ENCODE measurements at regions of chr11 and their contacts with region 1.

Region 1: DNA sequence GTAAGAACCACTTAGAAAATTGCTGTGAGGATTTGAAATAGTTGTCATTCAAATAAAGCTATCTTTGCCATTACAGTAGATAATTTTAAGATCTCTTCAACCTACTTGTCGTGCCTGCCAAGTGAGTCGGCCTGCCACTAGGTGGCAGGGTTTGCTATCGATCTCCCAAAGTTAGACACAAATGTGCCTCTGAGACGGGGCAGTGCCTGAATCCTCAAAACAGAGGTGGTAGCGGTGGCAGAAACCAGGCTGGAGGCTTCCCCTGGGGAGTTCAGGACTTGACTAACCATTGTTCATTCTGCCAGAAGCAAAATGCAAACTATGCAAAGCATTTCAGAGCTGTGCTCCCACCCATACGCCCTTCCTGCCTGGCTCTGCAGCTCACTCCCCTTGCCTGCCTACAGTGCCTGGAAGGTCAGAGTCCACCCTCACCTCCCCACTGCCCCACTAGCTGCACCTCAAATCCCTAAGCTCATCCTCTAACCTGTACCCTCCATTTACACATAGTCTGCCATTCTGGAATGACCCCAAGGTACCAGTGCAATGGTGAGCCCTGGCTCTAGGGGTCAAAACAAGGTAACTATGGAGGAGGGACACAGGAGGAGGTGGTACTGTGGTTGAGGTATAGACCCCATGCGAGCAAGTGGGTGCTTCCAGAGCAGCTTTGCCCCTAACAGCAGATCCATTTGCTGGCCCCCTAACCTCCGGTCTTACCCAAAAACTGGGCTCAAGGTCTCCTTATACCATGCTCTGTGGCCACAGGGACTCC is 82.1 kb downstream of the C11orf58 start:
- DNase-seq: peak; percentile 90
- ATAC-seq: peak; percentile 94
- H3K4me3 Mint-ChIP-seq: no peak overlapping the region
- H3K27ac Mint-ChIP-seq: no peak overlapping the region
- H3K4me1 Mint-ChIP-seq: peaks cover 4% of the 10 kb centered on the region
- H3K27me3 Mint-ChIP-seq: no peaks in the 10 kb centered on the region

Region 2: GRCh38 chr11:16727806-16728205 is 92.7 kb before region 1 on chr11:
- CTCF ChIA-PET with region 1: no interaction called
- POLR2A ChIA-PET with region 1: no interaction called
- intact Hi-C with region 1: no loop called
- DNase-seq: no peak
- ATAC-seq: no peak
- H3K4me3 Mint-ChIP-seq: no peak overlapping the region
- H3K27ac Mint-ChIP-seq: no peak overlapping the region
- H3K4me1 Mint-ChIP-seq: no peaks in the 10 kb centered on the region
- H3K27me3 Mint-ChIP-seq: peaks cover 6% of the 10 kb centered on the region

Region 3: DNA sequence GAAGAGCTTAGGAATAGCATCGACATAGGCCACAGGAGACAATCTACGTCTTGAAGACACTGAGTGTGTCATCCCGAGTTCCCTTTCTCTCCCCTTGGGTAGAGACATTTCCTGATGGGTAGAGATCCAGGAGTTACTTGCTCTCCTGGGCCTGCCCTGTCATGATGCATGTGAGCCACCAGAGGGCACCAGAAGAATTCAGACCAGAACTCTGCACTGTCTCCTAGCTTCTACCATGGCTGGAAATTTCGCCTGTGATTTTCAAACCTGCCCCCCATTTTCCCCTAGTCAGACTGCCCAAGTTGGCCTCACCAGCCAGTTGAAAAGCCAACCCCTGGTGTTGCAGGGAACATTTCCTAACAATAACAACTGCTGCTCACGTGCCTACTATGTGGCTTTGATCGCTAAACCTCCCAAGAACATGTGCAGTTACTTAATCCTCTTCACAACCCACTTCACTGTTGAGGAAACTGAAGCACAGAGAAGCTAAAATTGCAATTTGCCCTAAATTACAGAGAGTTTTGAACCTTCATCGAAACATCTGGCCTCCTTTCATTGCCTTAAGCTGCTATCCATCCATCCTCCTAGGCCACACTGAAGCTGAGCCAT is 34.9 kb before region 1 on chr11:
- CTCF ChIA-PET with region 1: interaction called, 8 read pairs
- POLR2A ChIA-PET with region 1: no interaction called
- intact Hi-C with region 1: loop called in 1 of 2 experiments (anchors 1 kb)
- DNase-seq: peak; percentile 77
- ATAC-seq: peak; percentile 80
- H3K4me3 Mint-ChIP-seq: no peak overlapping the region
- H3K27ac Mint-ChIP-seq: no peak overlapping the region
- H3K4me1 Mint-ChIP-seq: no peaks in the 10 kb centered on the region
- H3K27me3 Mint-ChIP-seq: no peaks in the 10 kb centered on the region

Region 4: GRCh38 chr11:16831316-16832192 is 11.0 kb after region 1 on chr11:
- CTCF ChIA-PET with region 1: interaction called, 13 read pairs
- POLR2A ChIA-PET with region 1: no interaction called
- intact Hi-C with region 1: no loop called
- DNase-seq: no peak
- ATAC-seq: no peak
- H3K4me3 Mint-ChIP-seq: no peak overlapping the region
- H3K27ac Mint-ChIP-seq: no peak overlapping the region
- H3K4me1 Mint-ChIP-seq: peaks cover 17% of the 10 kb centered on the region
- H3K27me3 Mint-ChIP-seq: no peaks in the 10 kb centered on the region

Region 5: DNA sequence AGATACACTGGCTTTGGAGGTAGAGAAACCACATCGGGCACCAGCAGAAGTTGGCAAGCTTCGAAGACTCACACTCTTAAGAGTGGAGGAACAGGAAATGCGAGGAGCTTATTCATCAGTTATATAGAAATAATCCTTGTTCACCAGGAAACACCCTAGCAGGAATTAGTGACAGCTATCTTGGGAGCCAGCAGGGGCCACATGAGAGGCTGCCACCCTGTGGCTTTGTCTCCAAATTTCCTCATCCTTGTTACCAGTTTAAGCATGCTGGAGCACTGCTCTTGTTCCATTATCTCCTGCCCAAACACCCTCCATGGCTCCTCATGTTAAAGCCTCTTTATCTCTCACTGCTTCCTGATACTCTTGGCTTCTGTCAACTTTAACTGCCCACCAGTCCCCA is 62.7 kb after region 1 on chr11:
- CTCF ChIA-PET with region 1: interaction called, 4 read pairs
- POLR2A ChIA-PET with region 1: no interaction called
- intact Hi-C with region 1: loop called in 1 of 2 experiments (anchors 1 kb)
- DNase-seq: no peak
- ATAC-seq: no peak
- H3K4me3 Mint-ChIP-seq: no peak overlapping the region
- H3K27ac Mint-ChIP-seq: no peak overlapping the region
- H3K4me1 Mint-ChIP-seq: peaks cover 4% of the 10 kb centered on the region
- H3K27me3 Mint-ChIP-seq: peaks cover 2% of the 10 kb centered on the region

Region 6: GRCh38 chr11:16935518-16936302 is 115.2 kb after region 1 on chr11:
- CTCF ChIA-PET with region 1: interaction called, 8 read pairs
- POLR2A ChIA-PET with region 1: no interaction called
- intact Hi-C with region 1: loop called in 1 of 2 experiments (anchors 1 kb)
- DNase-seq: peak; percentile 61
- ATAC-seq: peak; percentile 86
- H3K4me3 Mint-ChIP-seq: no peak overlapping the region
- H3K27ac Mint-ChIP-seq: no peak overlapping the region
- H3K4me1 Mint-ChIP-seq: no peaks in the 10 kb centered on the region
- H3K27me3 Mint-ChIP-seq: peaks cover 7% of the 10 kb centered on the region

Region 7: GRCh38 chr11:17063171-17064002 is 242.9 kb after region 1 on chr11:
- CTCF ChIA-PET with region 1: interaction called, 52 read pairs
- POLR2A ChIA-PET with region 1: no interaction called
- intact Hi-C with region 1: loop called (anchors 1 kb)
- DNase-seq: peak; percentile 80
- ATAC-seq: peak; percentile 89
- H3K4me3 Mint-ChIP-seq: no peak overlapping the region
- H3K27ac Mint-ChIP-seq: no peak overlapping the region
- H3K4me1 Mint-ChIP-seq: no peaks in the 10 kb centered on the region
- H3K27me3 Mint-ChIP-seq: no peaks in the 10 kb centered on the region